RWPE1 (cell line): ENCODE measurements at regions of chr4 and their contacts with region 1.

Region 1: GRCh38 chr4:183987987-183988392 is 82.9 kb downstream of the STOX2 start:
- DNase-seq: peak; percentile 72
- H3K27ac ChIP-seq: peak overlapping the region; percentile 93
- CTCF ChIP-seq: no peak

Region 2: DNA sequence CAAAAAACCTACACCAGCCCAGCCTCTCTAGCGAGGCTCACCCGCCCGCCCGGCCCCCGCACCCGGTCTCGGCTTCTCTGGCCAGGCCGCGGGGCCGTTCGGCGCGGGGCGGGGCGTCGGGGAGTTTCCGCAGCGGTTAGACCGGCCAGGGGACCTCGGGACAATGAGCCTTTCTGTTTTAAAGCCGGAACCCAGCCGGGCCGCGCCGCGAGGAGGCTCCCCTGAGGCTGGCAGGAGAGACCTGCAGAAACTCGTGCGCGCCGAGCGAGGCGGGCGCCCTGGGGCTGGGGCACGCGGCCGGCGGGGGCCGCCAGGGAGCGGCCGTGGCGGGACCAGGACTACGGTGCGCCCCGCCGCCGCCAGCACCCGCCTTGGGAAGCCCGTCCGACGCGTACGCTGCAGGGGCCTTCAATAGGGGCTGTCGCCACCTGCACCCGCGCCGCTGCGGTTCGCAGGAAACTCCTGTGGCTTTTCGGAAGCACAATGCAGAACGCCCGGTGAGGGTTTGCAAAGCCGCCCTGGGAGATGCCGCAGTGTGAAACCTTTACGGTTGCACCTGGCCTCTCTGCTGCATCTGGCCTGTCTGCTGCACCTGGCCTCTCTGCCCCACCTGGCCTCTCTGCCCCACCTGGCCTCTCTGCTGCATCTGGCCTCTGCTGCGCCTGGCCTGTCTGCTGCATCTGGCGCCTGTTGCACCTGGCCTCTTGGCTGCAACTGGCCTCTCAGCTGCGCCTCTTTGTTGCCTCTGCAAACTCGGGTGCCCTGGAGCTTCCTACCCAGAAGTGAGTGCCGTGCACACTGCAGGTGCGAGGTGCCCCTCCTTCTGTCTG is 265.0 kb before region 1 on chr4:
- CTCF ChIA-PET with region 1: no interaction called
- POLR2A ChIA-PET with region 1: interaction called, 10 read pairs
- DNase-seq: peak; percentile 54
- H3K27ac ChIP-seq: peak overlapping the region; percentile 29; the same call in 1 of the 2 replicates
- CTCF ChIP-seq: peak; percentile 31

Region 3: DNA sequence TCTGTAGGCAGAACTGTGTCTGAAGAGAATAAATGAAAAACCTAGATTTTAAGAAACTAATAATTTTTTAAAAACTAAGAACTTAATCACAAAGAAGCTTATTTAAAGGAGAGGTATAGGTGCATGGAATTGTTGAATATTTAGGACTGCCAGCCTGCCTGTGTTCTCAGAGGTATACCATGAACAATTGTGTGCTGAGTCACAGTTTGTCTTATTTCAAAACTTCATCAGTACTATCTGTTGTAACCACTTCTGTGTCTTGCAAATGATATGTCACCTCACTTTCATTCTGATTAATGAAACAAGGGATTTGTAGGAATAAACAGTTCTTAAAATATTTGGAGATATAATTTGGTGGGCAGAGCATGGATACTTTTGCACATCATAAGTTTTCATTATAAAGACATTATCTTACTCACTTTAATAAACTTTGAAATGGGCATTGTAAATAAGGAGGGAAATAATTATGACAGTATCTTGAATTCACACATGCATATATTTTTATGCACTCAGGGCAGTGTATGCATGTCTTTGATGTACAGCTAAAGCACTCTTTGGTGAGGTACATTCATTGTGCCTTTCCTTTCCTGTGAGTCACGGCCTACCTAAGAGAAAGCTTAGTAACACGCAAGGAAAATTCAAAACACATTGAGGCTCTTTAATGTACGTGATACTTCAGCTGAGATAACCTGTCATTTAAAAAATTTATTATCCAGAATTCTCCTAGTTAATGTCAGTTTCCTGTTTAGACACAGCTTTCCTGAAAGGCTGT is 51.2 kb before region 1 on chr4:
- CTCF ChIA-PET with region 1: no interaction called
- POLR2A ChIA-PET with region 1: no interaction called
- DNase-seq: peak; percentile 15
- H3K27ac ChIP-seq: no peak overlapping the region
- CTCF ChIP-seq: no peak

Region 4: GRCh38 chr4:184163813-184164212 is 175.8 kb after region 1 on chr4:
- CTCF ChIA-PET with region 1: no interaction called
- POLR2A ChIA-PET with region 1: no interaction called
- DNase-seq: peak; percentile 45
- H3K27ac ChIP-seq: no peak overlapping the region
- CTCF ChIP-seq: peak; percentile 42